Activated CD4-positive, alpha-beta T cell treated with anti-CD3 and anti-CD28 coated beads, Interleukin-2, amount 10 ng/mL, durations not matched to agents 7 days and 5 days (primary cell): ENCODE measurements at regions of chr15 and their contacts with region 1.

Region 1: DNA sequence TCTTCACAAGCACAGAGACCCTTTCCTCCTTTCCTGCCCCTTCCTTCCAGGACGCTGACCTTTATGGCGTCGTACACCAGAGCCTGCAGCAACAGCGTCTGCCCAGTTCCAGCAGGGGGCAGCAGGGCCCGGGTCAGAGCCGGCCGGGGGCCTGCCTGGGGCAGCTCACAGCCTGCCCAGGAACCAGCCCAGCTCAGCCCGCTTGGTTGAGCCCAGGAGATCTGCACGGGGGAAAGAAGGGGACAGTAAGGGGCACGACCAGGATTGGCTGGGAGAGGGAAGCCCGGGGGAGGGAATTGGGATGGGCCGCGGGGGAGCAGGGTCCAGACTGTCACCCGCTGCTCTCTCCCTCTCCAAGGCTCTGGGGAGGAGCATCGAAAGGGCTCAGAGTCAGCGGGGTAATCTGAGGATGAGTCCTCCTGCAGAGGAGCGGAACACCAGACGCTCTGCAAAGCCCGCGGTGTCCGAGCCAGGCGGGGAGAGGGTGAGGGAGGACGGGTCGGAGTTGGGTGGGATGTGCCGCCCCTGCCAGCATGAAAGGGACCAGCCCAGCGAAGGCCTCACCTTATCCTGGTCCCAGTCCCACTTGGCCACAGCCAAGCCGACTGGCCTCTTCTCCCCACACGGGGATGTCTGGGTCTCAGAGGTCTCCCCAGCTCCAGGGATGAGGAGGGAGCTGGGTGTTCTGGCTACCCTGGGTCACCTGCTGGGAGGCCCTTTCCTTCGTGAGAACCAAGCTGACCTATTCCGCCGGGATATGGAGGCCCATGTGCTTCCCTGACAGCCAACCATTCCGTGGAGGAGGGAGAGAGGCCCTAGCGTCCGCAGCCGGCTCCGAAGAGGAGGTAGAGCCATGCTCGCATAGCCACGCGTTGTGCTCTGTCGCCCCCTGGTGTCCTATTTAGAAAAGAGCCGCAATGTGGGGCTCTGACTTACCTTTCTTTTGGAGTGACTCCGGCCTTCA is 7.4 kb upstream of the IGDCC3 start:
- DNase-seq: peak; percentile 87
- H3K4me3 Mint-ChIP-seq: peak overlapping the region; percentile 73
- H3K27ac Mint-ChIP-seq: no peak overlapping the region
- H3K4me1 Mint-ChIP-seq: peaks cover 13% of the 10 kb centered on the region
- H3K27me3 Mint-ChIP-seq: peaks cover 28% of the 10 kb centered on the region

Region 2: GRCh38 chr15:65318870-65319356 is 66.3 kb before region 1 on chr15:
- CTCF ChIA-PET with region 1: interaction called, 19 read pairs
- POLR2A ChIA-PET with region 1: no interaction called
- DNase-seq: peak; percentile 79
- H3K4me3 Mint-ChIP-seq: no peak overlapping the region
- H3K27ac Mint-ChIP-seq: no peak overlapping the region
- H3K4me1 Mint-ChIP-seq: no peaks in the 10 kb centered on the region
- H3K27me3 Mint-ChIP-seq: peaks cover 13% of the 10 kb centered on the region

Region 3: DNA sequence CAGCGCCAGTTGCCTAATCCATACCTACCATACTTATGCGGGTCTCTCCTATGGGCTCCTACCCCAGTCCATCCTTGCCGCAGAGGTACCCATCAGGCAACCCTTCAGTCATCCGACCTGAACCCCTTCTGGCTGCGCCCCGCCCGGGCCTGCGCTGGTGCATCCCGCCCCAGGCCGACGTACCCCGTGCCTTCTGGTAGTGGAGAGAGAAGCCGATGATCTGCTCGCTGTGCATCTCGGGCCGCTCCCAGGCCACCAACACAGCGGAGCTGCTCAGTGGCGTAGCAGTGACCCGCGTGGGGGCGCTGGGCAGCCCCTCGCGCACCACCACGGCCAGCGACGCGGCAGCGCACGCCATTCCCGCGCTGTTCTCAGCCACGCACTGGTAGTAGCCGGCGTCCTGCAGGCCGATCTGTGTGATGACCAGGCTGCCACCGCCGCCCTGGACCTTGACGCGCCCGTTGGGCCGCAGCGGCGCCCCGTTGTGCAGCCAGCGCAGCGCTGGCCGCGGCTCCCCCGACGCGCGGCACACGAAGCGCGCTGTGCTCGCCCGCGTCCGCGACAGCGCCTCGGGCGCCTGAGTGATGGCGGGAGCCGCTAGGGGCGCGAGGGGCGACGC is 10.5 kb after region 1 on chr15:
- CTCF ChIA-PET with region 1: interaction called, 12 read pairs
- POLR2A ChIA-PET with region 1: no interaction called
- DNase-seq: no peak
- H3K4me3 Mint-ChIP-seq: no peak overlapping the region
- H3K27ac Mint-ChIP-seq: no peak overlapping the region
- H3K4me1 Mint-ChIP-seq: peaks cover 4% of the 10 kb centered on the region
- H3K27me3 Mint-ChIP-seq: peaks cover 58% of the 10 kb centered on the region

Region 4: DNA sequence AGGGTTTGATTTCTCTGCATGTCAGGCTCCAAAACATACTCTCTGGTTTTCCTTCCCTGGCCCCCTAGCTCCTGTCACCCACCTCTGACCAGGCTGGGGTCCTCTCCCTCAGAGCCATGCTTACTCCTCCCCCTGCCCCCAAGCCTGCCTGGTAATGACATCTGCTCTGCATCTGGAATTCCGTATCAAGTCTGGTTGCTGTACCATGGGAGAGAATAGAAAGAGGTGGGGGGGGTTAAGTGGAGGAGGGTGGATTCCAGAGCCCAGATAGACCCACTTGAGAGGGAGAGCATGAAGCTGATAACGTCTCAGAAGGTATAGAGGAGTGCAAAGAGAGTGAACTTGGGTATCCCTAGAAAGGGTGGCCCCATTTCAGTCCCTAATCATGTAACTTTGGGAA is 33.4 kb after region 1 on chr15:
- CTCF ChIA-PET with region 1: no interaction called
- POLR2A ChIA-PET with region 1: no interaction called
- DNase-seq: no peak
- H3K4me3 Mint-ChIP-seq: no peak overlapping the region
- H3K27ac Mint-ChIP-seq: no peak overlapping the region
- H3K4me1 Mint-ChIP-seq: peaks cover 12% of the 10 kb centered on the region
- H3K27me3 Mint-ChIP-seq: peaks cover 56% of the 10 kb centered on the region

Region 5: DNA sequence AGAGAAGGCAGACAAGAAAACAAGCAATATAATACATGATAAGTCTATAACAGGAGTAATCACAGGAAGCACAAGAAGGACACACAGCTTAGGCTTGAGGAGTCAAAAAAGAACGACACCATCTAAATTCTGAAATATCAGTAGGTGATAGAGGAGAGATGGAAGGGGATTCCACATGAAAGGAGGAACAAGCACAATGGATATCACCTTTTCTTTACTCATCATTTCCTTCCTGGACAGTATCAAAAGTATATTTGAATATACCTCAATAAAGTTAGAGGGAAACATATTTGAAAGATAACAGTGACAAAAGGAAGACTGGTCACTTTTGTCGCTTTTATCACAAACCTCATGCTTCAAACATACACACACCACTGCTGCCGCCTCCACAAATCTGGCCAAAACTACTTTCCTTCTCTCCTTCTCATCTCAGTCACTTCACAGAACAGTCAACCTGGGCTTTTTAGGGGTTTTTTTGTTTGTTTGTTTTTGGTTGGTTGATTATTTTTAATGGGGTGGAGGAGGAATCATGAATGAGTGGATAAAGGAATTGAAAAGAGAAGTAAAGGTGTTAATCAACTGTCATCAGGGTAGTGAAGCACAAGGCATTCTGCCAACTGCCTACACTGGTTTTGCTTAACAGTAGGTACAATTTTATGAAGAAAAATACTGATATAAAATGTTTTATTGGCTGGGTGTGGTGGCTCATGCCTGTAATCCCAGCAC is 388.4 kb after region 1 on chr15:
- CTCF ChIA-PET with region 1: no interaction called
- POLR2A ChIA-PET with region 1: no interaction called
- DNase-seq: no peak
- H3K4me3 Mint-ChIP-seq: no peak overlapping the region
- H3K27ac Mint-ChIP-seq: peak overlapping the region; percentile 9
- H3K4me1 Mint-ChIP-seq: peaks cover 36% of the 10 kb centered on the region
- H3K27me3 Mint-ChIP-seq: no peaks in the 10 kb centered on the region